ENCODE measurements at regions of chr1 and their contacts with region 1.

Region 1: DNA sequence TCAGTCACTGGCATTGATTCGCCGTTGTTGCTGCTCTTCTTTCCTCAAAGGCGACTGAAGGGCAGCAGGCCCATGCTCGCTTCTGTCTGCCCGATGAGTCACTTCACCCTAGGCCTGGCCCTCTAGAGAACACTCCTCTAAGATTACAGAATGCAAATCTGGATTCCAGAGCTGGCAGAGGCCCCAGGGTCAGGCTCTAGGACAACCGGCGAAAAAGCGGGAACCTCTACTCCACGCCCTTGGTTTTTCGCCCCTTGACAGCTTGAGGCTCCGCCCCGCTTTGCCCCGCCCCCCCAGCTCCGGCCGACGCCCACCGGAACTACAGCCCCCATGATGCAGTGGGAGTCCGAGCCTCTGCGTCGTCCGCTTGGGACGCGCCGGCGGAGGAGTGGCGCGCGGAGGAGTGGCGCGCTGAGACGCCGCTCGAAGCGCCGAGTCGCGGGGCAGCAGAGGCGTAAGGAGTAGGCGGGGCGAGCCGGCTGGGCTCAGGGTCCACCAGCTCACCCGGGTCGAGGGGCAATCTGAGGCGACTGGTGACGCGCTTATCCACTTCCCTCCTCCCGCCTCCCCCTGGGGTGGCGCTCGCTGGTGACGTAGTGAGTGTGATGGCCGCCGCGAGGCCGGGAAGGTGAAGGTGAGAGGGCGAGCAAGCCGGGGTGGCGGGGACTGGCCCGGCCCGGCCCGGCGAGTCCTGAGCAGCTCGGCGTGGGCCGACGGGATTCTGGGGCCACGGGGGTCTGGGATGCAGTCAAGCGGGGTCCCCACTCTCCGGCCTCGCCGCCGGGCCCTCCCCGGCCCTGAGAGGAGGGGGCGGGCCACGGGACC is at the start of gene MFN2:
- DNase-seq: peak; percentile 97
- H3K4me3 ChIP-seq: peak within 1 kb of the TSS; percentile 78 to 94 (median 84)
- H3K27ac ChIP-seq: peak within 1 kb of the TSS; percentile 96
- H3K4me1 ChIP-seq: peaks cover 0 to 5% (median 2%) of the 10 kb centered on the region in 4 experiments; a peak in 3 of 7 replicates
- H3K27me3 ChIP-seq: no peaks in the 10 kb centered on the region
- CTCF ChIP-seq: no peak
- EP300 ChIP-seq: 0 out of 3 replicates have a peak, but pooled peaks of 1 of the 2 experiments have one; percentile 6
- POLR2A ChIP-seq: peak; percentile 91 to 95
- RAD21 ChIP-seq: no peak
- total RNA-seq, gene MFN2: 58.2 and 62.5 TPM in 2 replicates

Region 2: DNA sequence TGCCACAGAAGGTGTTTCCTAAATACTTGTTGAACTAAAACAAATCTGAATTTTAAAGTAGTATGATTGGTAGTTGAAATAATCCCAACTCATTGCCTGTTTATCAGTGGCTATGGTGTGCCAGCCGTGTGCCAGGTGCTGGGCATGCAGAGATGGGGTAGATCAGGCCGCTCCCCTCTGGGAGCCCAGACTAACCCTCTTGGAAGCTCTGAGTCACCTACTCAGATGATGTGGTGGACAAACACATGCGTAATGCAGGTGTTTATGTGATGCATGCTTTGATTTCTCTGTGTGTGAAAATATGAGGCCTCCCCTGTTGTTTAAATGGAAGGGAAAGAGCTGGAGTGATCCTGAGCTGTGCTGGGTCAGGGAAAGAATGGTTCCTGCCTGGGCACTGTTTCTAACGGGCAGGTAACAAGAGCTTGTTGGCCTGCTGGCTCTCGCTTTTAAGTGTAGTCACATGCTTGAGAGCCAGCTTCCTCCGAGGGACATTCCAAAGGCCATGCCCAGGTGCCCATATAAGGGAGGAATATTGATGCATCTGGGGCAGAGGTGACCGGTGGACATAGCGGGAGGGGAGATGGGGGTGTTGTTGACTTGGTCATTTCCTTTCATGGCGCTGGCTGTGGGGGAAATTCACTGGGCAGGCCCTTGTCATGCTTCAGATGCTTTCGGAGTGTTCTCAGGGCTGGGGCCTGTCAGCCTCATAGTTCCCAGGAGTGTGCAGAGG is 10.4 kb after region 1 on chr1:
- CTCF ChIA-PET with region 1: interaction called, 7 read pairs
- POLR2A ChIA-PET with region 1: interaction called, 13 read pairs
- DNase-seq: no peak
- H3K4me3 ChIP-seq: no peak overlapping the region
- H3K27ac ChIP-seq: no peak overlapping the region
- H3K4me1 ChIP-seq: no peaks in the 10 kb centered on the region
- H3K27me3 ChIP-seq: no peaks in the 10 kb centered on the region
- CTCF ChIP-seq: no peak
- EP300 ChIP-seq: no peak
- POLR2A ChIP-seq: no peak
- RAD21 ChIP-seq: no peak

Measured in H1 (cell line).